ENCODE measurements at regions of chr7 and their contacts with region 1.

Region 1: DNA sequence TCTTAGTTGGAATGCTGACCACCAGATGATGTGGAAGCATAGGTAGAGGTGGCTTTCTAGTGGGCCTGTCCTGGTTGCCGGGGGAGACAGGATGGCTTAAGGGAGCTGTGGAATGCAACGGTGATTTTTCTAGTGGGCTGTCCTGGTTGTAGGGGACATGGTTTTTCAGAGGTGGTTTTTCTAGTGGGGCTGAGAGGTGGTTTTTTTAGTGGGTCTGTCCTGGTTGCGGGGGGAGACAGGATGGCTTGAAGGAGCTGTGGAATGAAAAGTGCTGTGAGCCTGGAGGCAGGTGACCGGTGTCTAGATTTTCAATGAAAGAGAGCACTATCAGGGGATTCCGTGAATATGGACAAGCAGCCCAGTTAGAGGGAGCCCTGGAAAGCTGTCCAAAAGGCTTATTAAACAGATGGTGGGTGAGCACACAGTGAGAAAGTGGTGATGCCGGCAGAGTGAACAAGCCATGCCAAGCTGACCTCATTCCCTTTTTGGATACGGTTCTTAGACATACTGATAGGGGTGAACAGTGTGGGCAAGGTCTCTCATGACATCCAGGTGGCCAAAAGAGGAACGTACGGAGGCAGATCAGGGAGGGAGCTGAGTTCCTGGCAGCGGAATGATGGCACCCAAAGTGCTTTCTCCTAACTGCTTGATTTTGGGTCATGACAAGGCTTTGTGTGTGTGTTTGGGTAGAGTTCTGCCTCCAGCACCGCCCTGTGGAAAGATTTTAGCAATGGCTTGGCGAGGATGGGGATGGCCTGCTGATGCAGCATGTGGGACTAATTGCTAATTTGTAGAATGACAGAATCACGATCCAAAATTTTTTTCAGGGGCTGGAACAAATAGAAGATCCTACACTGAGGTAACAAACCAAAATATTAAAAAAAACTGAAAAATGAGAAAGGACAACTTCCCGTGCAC is 126.6 kb downstream of the TMEM178B start:
- DNase-seq: peak in 4 of 10 donors; percentile 16 to 82 (median 43)
- H3K4me3 ChIP-seq: peak overlapping the region in 1 of 59 donors; percentile 4
- H3K27ac ChIP-seq: peak overlapping the region in 2 of 59 donors; percentile 7 to 13
- H3K27me3 ChIP-seq: no peaks in the 10 kb centered on the region
- CTCF ChIP-seq: peak in 1 of 56 donors; percentile 50

Region 2: DNA sequence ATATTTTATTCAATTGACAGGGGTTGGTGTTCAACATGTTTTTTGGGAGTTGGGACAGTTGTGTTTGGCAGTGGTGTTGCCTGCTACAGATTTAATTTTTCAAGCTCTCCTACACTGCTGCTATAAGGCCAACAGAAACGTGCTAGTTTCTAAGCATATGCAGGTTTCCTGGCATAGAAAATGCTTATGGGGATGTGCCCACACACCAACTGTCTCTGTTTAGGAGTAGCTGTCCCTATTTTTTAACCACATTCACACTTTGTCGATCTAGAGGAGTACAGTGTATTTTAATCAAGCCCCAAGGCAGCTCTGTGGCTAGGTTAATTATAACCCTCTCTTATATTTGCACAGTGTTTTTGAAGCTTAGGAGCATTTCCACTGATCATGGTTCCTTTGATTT is 98.0 kb before region 1 on chr7:
- intact Hi-C with region 1: loop called in 1 of 2 experiments (anchors 5 kb)
- DNase-seq: peak in 2 of 10 donors; percentile 6 to 47
- H3K4me3 ChIP-seq: no peak overlapping the region
- H3K27ac ChIP-seq: no peak overlapping the region
- H3K27me3 ChIP-seq: no peaks in the 10 kb centered on the region
- CTCF ChIP-seq: no peak

Region 3: GRCh38 chr7:141354251-141354650 is 153.8 kb after region 1 on chr7:
- intact Hi-C with region 1: no loop called
- DNase-seq: no peak
- H3K4me3 ChIP-seq: no peak overlapping the region
- H3K27ac ChIP-seq: peak overlapping the region in 41 of 59 donors; percentile 2 to 79 (median 49)
- H3K27me3 ChIP-seq: no peaks in the 10 kb centered on the region
- CTCF ChIP-seq: no peak

Measured in dorsolateral prefrontal cortex (tissue), 120 donors.